Activated CD4-positive, alpha-beta memory T cell treated with anti-CD3 and anti-CD28 coated beads for 36 hours (primary cell): ENCODE measurements at regions of chr4 and their contacts with region 1.

Region 1: GRCh38 chr4:153573881-153574802 is 108.0 kb downstream of the TMEM131L start:
- DNase-seq: peak; percentile 73
- H3K4me3 Mint-ChIP-seq: no peak overlapping the region
- H3K27ac Mint-ChIP-seq: peak overlapping the region; percentile 30
- H3K4me1 Mint-ChIP-seq: peaks cover 55% of the 10 kb centered on the region
- H3K27me3 Mint-ChIP-seq: no peaks in the 10 kb centered on the region

Region 2: DNA sequence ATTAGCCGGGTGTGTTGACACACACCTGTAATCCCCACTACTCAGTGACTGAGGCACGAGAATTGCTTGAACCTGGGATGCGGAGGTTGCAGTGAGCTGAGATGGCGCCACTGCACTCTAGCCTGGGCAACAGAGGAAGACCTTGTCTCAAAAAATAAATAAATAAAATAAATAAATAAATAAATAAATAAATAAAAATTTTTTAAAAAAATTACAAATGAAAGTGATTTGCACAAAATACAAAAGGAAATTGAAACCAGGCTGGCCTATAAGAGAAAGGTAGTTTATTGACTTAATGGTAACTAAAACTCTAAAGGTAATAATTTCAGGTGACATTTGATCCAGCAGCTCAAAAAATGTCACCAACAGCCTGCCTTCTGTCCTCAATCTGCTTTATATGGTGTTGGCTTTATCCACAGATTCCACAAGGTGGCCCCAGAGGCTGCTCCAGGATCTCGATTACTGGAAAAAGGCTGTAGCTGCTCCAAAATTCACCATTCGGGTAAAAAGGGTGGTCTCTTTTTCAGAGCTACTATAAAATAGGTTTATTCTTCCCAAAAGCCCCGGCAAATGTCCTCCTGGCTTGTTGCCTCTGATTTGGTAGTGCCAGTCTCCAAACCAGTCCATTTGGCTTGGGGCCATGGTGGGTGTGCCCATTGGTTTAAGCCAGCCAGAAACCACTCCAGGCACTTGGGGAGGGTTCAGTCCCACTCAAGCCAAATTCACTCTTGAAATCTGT is 431.3 kb before region 1 on chr4:
- CTCF ChIA-PET with region 1: interaction called, 12 read pairs
- POLR2A ChIA-PET with region 1: no interaction called
- intact Hi-C with region 1: no loop called
- DNase-seq: peak; percentile 75
- H3K4me3 Mint-ChIP-seq: no peak overlapping the region
- H3K27ac Mint-ChIP-seq: no peak overlapping the region
- H3K4me1 Mint-ChIP-seq: peaks cover 10% of the 10 kb centered on the region
- H3K27me3 Mint-ChIP-seq: no peaks in the 10 kb centered on the region

Region 3: GRCh38 chr4:153344131-153345010 is 229.8 kb before region 1 on chr4 and contains the start of gene MND1:
- CTCF ChIA-PET with region 1: interaction called, 42 read pairs
- POLR2A ChIA-PET with region 1: interaction called, 5 read pairs
- intact Hi-C with region 1: loop called (anchors 1 kb)
- DNase-seq: peak; percentile 95
- H3K4me3 Mint-ChIP-seq: peak within 1 kb of the TSS; percentile 93
- H3K27ac Mint-ChIP-seq: peak within 1 kb of the TSS; percentile 86
- H3K4me1 Mint-ChIP-seq: peaks cover 26% of the 10 kb centered on the region
- H3K27me3 Mint-ChIP-seq: no peaks in the 10 kb centered on the region
- total RNA-seq, gene MND1: 32.0 to 36.1 TPM

Region 4: DNA sequence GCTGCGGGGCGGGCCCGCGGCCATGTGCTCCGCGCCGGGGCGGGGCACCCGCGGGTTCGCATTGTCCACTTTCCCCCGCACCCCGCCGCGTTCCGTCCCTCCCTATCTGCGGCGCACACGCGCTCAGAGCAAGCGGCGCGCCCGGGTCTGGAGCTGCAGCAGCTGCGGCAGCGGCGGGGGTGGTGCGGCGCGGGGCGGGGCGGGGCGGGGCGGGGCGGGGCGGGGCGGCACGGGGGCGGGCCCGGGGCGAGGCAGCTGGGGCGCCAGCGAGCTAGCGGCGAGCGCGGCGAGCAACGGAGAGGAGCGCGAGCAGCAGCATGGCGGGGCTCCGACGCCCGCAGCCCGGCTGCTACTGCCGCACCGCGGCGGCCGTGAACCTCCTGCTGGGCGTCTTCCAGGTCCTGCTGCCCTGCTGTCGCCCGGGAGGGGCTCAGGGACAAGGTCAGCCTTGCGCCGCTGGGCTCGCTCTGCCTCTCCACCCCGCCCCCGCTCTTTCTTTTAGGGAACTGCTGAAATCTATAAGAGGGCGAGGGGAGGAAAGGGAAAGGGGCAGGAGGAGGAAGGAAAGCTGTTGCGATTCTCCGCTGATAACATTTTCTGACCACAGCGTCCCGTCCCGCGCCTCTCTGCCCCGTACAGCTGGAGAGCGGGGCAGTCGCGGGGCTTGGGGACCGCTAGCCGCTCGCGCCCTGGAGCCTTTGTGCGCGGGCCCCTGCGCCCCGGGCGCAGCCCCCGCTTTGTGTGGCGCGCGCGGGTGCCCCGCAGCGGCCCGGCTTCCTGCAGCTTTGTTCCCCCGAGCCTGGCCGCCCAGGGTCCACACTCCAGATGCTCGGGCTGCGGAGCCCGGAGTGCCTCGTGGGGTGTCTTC is 107.8 kb before region 1 on chr4 and contains the start of gene TMEM131L:
- CTCF ChIA-PET with region 1: interaction called, 37 read pairs
- POLR2A ChIA-PET with region 1: interaction called, 6 read pairs
- intact Hi-C with region 1: loop called (anchors 1 kb)
- DNase-seq: peak; percentile 78
- H3K4me3 Mint-ChIP-seq: peak within 1 kb of the TSS; percentile 93
- H3K27ac Mint-ChIP-seq: peak within 1 kb of the TSS; percentile 88
- H3K4me1 Mint-ChIP-seq: peaks cover 47% of the 10 kb centered on the region
- H3K27me3 Mint-ChIP-seq: peaks cover 1% of the 10 kb centered on the region
- total RNA-seq, gene TMEM131L: 32.7 to 33.3 TPM

Region 5: DNA sequence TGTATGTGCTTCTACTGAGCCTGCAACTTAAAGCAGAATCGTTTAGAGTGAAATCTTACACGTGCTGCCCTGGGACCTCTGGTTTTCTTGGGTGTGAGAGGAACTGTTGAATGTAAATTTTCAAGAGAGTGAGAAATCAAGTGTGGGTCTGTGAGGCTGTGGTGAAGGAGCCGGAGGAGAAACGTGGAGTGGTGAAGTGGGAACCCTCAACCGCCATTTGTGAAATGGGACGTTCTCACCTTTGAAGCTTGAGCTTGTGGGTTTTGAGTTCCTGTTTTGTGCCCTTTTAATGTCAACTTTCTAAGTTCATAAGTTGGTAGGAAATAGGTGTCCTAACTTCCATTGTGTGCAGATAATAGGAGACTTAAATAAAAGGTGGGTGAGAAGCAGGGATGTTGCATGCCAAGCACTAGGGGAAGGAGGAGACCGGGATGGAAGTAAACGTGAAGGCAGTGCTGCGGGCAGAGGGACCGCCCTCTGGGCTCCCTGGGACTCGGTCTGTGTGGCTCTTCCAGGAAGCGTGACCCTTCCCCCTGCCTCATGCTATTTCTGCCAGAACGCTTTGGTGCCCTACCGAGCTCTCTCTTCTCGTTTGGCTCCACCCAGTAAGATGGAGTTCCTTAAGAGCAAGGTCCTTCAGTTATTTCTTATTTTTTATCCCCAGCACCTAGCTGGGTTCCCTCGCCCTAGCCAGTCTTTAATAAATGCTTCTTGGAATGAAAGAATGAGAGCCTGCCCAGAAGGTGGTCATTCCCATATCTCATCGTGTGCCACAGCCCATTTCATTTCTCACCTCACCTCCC is 51.9 kb before region 1 on chr4:
- CTCF ChIA-PET with region 1: interaction called, 10 read pairs
- POLR2A ChIA-PET with region 1: no interaction called
- intact Hi-C with region 1: loop called (anchors 10 kb)
- DNase-seq: peak; percentile 80
- H3K4me3 Mint-ChIP-seq: peak overlapping the region; percentile 67
- H3K27ac Mint-ChIP-seq: peak overlapping the region; percentile 96
- H3K4me1 Mint-ChIP-seq: peaks cover 91% of the 10 kb centered on the region
- H3K27me3 Mint-ChIP-seq: no peaks in the 10 kb centered on the region

Region 6: DNA sequence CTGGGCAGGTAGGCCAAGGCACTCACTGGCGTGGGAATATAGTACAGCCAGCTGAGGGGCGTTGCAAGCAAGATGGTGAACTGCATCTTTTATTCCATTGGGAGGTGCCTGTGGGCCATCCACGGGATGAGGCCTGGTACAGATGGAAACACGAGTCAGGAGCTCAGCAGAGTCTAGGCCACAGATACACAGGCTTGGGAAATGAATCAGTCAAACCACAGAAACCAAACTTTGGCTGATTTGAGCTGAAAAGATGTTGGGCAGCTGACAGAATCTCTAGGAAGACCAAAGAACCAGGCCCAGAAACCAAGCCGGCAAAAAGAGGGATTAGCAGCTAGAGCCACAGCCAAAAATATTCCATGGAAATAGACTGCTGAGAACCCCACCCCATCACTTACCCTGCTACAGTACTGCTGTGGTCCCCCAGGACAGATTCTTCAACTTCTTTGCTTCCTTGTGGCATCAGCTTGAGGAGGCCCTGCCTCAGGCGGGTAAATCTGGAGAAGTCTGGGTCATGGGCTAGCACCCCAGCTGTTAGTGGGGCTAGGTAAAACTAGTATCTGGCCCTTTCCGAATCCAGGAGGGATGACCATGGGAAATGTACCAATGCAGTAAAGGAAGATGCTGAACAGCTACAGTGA is 32.6 kb before region 1 on chr4:
- CTCF ChIA-PET with region 1: interaction called, 23 read pairs
- POLR2A ChIA-PET with region 1: interaction called, 3 read pairs
- intact Hi-C with region 1: loop called (anchors 2 kb)
- DNase-seq: peak; percentile 68
- H3K4me3 Mint-ChIP-seq: no peak overlapping the region
- H3K27ac Mint-ChIP-seq: peak overlapping the region; percentile 13
- H3K4me1 Mint-ChIP-seq: peaks cover 64% of the 10 kb centered on the region
- H3K27me3 Mint-ChIP-seq: no peaks in the 10 kb centered on the region